ENCODE measurements at regions of chr2 and their contacts with region 1.

Region 1: GRCh38 chr2:226791487-226792081 is 8.0 kb downstream of the IRS1 start:
- DNase-seq: peak; percentile 92 to 95 (median 94)
- ATAC-seq: peak; percentile 76 to 90 (median 82)
- H3K4me3 ChIP-seq: peak overlapping the region; percentile 48 to 74 (median 73)
- H3K27ac ChIP-seq: peak overlapping the region; percentile 82 to 99 (median 98)
- H3K4me1 ChIP-seq: peaks cover 0 to 35% (median 15%) of the 10 kb centered on the region in 4 donors
- H3K27me3 ChIP-seq: no peaks in the 10 kb centered on the region
- CTCF ChIP-seq: peak in 3 of 4 donors; percentile 22 to 71 (median 29)
- POLR2A ChIP-seq: peak; percentile 83

Region 2: DNA sequence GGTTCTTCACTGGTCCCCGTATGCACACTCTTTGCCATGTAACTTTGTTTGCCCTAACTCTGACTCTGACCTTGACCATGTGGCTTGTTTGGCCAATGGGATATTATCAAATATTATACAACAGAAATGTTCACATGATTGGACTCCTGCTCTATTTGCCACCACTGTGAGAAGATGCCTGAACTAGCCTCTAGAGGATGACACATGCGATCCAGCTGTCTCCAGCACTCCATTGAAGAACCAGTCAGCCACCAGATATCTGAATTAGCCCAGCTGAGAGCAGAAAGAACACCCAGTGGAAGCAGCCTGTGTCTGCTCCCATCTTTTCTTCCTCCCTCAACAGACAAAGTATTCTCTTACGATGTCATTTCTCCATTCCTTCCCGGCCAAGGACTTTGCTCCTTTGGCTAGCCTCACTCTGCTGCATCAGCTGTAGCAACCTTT is 404.1 kb before region 1 on chr2:
- intact Hi-C with region 1: no loop called
- DNase-seq: no peak
- ATAC-seq: peak in 3 of 4 donors; percentile 39 to 60 (median 47)
- H3K4me3 ChIP-seq: no peak overlapping the region
- H3K27ac ChIP-seq: no peak overlapping the region
- H3K4me1 ChIP-seq: no peaks in the 10 kb centered on the region
- H3K27me3 ChIP-seq: no peaks in the 10 kb centered on the region
- CTCF ChIP-seq: no peak
- POLR2A ChIP-seq: no peak

Region 3: DNA sequence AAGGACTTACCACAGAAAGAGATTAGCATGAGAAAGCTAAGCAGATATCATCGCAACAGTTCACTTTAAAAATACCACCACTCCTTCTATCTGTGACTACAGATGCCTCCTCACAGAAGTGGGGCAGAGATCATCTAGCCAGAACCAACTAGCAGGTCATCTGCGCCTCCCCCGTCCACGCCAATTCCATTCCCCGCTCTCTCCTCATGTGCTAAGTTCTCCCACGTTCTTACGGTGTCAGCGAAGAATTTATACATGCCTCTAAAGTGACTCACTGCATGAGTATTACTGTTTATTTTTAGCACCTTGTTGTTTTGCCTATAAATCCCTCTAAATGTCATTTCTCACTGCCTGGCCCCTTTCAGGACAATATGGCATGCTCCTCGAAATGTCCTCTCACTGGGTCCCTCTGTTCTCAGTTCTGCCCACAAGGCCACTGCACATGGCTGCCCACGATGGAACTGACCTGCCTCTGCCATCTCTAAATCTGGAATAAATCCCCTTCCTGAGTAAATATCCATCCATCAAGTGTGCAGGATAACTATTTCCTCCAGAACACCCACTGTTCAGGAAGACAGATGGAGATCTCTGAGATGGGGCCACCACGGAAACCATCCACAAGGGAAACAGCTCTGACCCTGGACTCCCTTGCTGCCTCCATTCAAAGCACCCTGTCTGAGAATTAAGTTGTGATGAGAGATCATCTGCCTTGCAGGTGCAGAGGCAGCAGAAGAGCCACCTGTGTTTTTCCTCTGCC is 129.6 kb before region 1 on chr2:
- intact Hi-C with region 1: loop called in 1 of 2 experiments (anchors 10 kb)
- DNase-seq: no peak
- ATAC-seq: no peak
- H3K4me3 ChIP-seq: no peak overlapping the region
- H3K27ac ChIP-seq: no peak overlapping the region
- H3K4me1 ChIP-seq: peaks cover 0 to 46% (median 9%) of the 10 kb centered on the region in 4 donors
- H3K27me3 ChIP-seq: no peaks in the 10 kb centered on the region
- CTCF ChIP-seq: no peak
- POLR2A ChIP-seq: no peak

Region 4: DNA sequence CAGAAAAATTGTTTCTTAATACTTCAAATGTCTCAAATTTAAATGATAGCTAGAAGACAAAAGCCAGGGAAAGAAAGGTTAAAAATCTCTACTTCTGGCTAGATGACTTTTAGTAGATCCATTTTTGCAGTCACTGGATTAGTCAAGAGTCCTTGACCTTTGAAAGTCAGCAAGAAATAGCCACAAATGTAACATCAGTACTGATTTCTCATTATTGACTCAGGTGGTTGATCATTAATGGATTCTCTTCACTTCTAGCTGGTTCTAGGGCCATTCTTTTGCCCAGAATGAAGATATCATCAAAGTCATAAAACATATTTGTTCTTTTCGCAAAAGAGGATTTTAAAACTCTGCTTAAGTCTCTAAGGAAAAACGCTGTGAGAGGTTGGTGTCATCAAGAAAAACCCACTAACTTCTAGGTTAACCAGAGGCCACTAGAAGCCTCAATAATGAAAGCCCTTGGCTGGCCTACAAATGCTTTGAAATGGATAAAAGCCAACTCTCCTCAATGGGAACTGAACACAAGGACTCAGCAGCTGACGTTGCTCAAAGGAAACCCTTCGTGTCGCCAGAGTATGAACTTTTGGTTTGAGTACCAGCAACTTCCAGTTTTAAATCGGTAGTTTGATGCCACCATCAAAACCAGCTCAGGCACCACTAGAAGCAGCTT is 58.3 kb before region 1 on chr2:
- intact Hi-C with region 1: loop called in 1 of 2 experiments (anchors 10 kb)
- DNase-seq: peak in 2 of 3 donors; percentile 55 to 72
- ATAC-seq: peak; percentile 72 to 89 (median 78)
- H3K4me3 ChIP-seq: peak overlapping the region in 1 of 3 donors; percentile 23
- H3K27ac ChIP-seq: peak overlapping the region; percentile 71 to 92 (median 86)
- H3K4me1 ChIP-seq: peaks cover 0 to 58% (median 19%) of the 10 kb centered on the region in 4 donors
- H3K27me3 ChIP-seq: no peaks in the 10 kb centered on the region
- CTCF ChIP-seq: peak in 1 of 4 donors; percentile 15
- POLR2A ChIP-seq: peak; percentile 29

Region 5: GRCh38 chr2:226742347-226742746 is 49.2 kb before region 1 on chr2:
- intact Hi-C with region 1: loop called (anchors 10 kb)
- DNase-seq: peak in 2 of 3 donors; percentile 58 to 77
- ATAC-seq: peak; percentile 44 to 67 (median 60)
- H3K4me3 ChIP-seq: no peak overlapping the region
- H3K27ac ChIP-seq: peak overlapping the region; percentile 24 to 70 (median 68)
- H3K4me1 ChIP-seq: peaks cover 0 to 57% (median 20%) of the 10 kb centered on the region in 4 donors
- H3K27me3 ChIP-seq: no peaks in the 10 kb centered on the region
- CTCF ChIP-seq: no peak
- POLR2A ChIP-seq: no peak

Measured in right lobe of liver (tissue), 6 donors.